ENCODE measurements at regions of chr17 and their contacts with region 1.

Region 1: GRCh38 chr17:75784473-75785015 is at the start of gene UNK:
- DNase-seq: peak; percentile 100
- H3K4me3 ChIP-seq: peak within 1 kb of the TSS; percentile 76
- H3K27ac ChIP-seq: peak within 1 kb of the TSS; percentile 91
- H3K4me1 ChIP-seq: peaks cover 54% of the 10 kb centered on the region
- CTCF ChIP-seq: no peak
- total RNA-seq, gene UNK: 41.5 and 44.0 TPM in 2 replicates

Region 2: DNA sequence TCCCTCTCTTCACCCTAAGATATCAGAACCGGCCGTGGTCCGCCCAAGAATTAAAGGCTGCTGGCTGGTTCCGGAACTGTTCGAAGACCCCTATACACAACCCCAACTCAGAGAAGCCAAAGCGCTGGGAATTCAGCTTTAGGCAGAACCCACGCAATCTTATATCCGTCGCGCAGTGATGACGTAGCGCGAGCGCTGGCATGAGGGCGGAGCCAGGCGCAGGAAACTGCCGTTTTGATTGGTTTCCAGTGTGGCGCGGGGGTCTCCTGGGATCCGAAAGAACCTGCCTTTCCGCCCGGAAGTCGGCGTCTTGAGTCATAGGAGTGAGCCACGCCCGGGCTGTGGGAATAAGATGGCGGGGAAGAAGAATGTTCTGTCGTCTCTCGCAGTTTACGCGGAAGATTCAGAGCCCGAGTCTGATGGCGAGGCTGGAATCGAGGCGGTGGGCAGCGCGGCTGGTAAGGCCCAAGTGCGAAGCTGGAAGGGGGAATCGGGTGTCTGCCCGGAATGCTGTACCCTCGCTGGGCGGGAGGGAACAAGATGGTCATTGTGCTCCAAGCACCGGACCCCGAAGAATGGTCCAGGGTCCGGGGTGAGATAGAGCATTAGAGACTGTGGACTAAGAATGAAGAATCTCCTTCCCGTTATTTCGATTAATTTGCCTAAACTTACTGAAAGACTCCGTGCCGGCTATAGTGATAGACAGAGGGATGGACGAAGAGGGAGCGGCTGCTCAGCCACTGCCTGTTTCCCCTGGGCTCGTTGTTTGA is 117.3 kb before region 1 on chr17 and contains the starts of genes RECQL5 and SAP30BP:
- CTCF ChIA-PET with region 1: no interaction called
- POLR2A ChIA-PET with region 1: interaction called, 3 read pairs
- intact Hi-C with region 1: loop called (anchors 1 kb)
- DNase-seq: peak; percentile 100
- H3K4me3 ChIP-seq: peak within 1 kb of the TSS; percentile 84
- H3K27ac ChIP-seq: peak within 1 kb of the TSS; percentile 94
- H3K4me1 ChIP-seq: peaks cover 54% of the 10 kb centered on the region
- CTCF ChIP-seq: no peak
- total RNA-seq, gene RECQL5: 90.0 and 91.9 TPM in 2 replicates
- total RNA-seq, gene SAP30BP: 122 and 127 TPM in 2 replicates

Region 3: GRCh38 chr17:75720725-75721462 is 63.6 kb before region 1 on chr17 and contains the start of gene ITGB4:
- CTCF ChIA-PET with region 1: no interaction called
- POLR2A ChIA-PET with region 1: no interaction called
- intact Hi-C with region 1: no loop called
- DNase-seq: peak; percentile 75
- H3K4me3 ChIP-seq: peak within 1 kb of the TSS; percentile 52
- H3K27ac ChIP-seq: no peak within 1 kb of the TSS
- H3K4me1 ChIP-seq: peaks cover 7% of the 10 kb centered on the region
- CTCF ChIP-seq: 0 out of 2 replicates have a peak, but pooled peaks have one; percentile 36
- total RNA-seq, gene ITGB4: 0.66 and 2.0 TPM in 2 replicates

Region 4: DNA sequence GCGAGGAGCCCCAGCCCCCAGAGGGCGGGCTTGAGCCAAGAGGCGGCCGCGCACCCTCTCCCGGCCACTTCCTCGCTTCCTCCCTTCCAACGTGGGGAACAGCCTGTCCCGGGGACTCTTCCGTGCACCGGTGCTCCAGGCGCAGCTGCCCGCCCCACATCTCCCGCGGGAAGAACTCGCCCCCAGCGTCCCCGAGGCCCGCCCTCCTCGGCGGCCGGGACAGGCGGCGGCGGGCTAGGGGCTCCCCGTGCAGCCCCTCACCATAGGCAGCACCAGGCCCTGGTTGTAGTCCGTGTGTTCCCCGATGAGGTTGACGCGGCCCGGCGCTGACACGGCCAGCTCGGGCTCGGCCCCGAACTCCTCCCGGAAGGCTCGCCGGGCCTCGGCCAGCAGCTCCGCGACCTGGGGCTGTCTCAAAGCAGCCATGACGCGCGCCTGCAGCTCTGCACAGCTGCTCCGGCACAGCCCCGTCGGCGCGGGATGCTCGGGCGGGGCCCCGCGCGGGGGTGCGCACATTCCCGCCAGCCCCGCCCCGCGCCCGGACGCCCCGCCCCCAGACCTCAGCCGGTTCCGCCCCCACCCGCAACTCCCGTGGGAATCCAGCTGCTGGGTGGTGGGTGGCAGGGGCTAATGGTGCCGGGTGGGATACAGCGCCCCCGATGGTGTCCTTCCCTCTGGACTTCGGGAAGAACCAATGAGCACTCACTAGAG is 19.7 kb before region 1 on chr17 and contains the start of gene GALK1:
- CTCF ChIA-PET with region 1: interaction called, 5 read pairs
- POLR2A ChIA-PET with region 1: interaction called, 12 read pairs
- intact Hi-C with region 1: loop called (anchors 1 kb)
- DNase-seq: peak; percentile 91
- H3K4me3 ChIP-seq: peak within 1 kb of the TSS; percentile 75
- H3K27ac ChIP-seq: peak within 1 kb of the TSS; percentile 22
- H3K4me1 ChIP-seq: peaks cover 18% of the 10 kb centered on the region
- CTCF ChIP-seq: peak; percentile 48
- total RNA-seq, gene GALK1: 88.2 and 99.4 TPM in 2 replicates

Region 5: GRCh38 chr17:75795820-75796607 is 11.5 kb after region 1 on chr17:
- CTCF ChIA-PET with region 1: interaction called, 3 read pairs
- POLR2A ChIA-PET with region 1: interaction called, 33 read pairs
- intact Hi-C with region 1: no loop called
- DNase-seq: no peak
- H3K4me3 ChIP-seq: no peak overlapping the region
- H3K27ac ChIP-seq: no peak overlapping the region
- H3K4me1 ChIP-seq: no peaks in the 10 kb centered on the region
- CTCF ChIP-seq: no peak

Region 6: GRCh38 chr17:75827252-75828115 is 42.9 kb after region 1 on chr17:
- CTCF ChIA-PET with region 1: interaction called, 4 read pairs
- POLR2A ChIA-PET with region 1: interaction called, 8 read pairs
- intact Hi-C with region 1: loop called (anchors 2 kb)
- DNase-seq: peak; percentile 71
- H3K4me3 ChIP-seq: peak overlapping the region; percentile 39
- H3K27ac ChIP-seq: peak overlapping the region; percentile 9
- H3K4me1 ChIP-seq: peaks cover 20% of the 10 kb centered on the region
- CTCF ChIP-seq: peak; percentile 82

Region 7: DNA sequence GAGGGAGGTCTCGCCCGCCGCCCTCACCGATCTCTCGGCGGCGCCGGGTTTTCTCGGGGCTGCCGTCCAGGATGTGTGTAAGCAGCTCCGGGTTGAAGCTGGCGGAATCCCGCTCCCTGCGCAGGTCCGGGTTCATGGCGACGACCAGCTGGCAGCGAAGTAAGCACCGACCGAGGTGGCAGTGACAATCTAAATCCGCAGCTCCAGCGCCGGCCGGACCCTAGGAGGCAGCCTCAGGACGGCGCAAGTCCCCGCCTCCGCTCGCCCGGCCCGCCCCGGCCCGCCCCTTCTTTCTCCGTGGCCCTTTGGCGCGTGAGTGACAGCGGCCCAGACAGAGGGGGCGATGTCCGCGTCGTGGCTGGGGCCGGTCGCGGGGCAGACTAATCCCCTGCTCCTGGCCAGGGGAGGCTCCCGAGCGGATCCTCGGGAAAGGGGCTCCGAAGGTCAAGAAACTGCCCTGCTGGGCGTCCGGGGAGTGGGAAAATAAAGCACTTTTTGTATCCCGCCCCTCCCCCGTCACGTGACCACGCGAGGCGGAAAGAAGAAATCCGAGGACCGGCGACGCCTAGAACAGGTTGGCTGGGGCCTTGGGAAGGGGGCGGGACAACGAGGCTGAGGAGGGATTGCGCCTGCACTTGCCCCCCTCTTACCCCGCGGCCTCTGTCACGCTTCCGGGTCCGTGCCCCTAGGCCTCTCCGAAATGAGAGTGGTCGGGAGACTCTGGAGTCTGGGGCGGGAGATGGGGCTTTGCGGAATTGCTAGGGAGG is 194.6 kb after region 1 on chr17 and contains the starts of genes ACOX1 and TEN1:
- CTCF ChIA-PET with region 1: no interaction called
- POLR2A ChIA-PET with region 1: no interaction called
- intact Hi-C with region 1: loop called (anchors 10 kb)
- DNase-seq: peak; percentile 99
- H3K4me3 ChIP-seq: peak within 1 kb of the TSS; percentile 79
- H3K27ac ChIP-seq: peak within 1 kb of the TSS; percentile 69
- H3K4me1 ChIP-seq: peaks cover 52% of the 10 kb centered on the region
- CTCF ChIP-seq: peak; percentile 66
- total RNA-seq, gene ACOX1: 12.3 and 22.6 TPM in 2 replicates
- total RNA-seq, gene TEN1: 17.6 and 22.5 TPM in 2 replicates

Region 8: DNA sequence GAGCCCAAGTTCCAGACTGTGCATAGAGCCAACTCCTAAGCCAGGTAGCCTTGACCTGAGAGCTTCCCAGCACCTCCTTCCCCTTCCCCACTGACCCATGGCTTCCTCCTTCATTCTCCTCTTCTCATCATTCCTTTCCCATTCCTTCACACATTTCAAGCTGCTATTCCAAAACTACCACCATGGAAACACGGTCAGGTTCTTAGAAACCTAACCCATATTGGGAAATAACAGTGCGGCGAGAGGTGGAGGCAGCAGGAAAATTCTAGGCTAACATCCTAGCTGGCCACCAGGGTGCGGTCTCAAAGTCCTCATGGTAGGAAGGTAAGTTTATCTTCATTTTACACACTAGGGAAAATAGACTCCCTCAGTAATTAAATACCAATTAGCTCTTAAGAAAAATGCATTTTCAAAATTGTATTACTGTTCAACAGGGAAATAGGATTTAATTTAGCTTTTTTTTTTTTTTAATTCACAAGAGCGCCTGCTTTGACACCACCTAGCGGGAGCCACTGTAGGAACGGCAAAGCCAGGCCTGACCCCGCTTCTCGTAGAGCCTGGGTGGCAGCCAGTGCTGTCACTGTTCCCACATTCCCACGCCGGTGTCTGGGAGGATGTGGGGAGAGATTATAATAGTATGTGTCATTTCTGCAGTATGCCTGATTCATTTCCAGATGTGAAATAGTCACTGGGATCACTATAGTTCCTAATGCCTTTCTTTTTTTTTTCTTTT is 585.9 kb after region 1 on chr17:
- CTCF ChIA-PET with region 1: no interaction called
- POLR2A ChIA-PET with region 1: no interaction called
- intact Hi-C with region 1: no loop called
- DNase-seq: peak; percentile 52
- H3K4me3 ChIP-seq: no peak overlapping the region
- H3K27ac ChIP-seq: no peak overlapping the region
- H3K4me1 ChIP-seq: no peaks in the 10 kb centered on the region
- CTCF ChIP-seq: peak; percentile 99

Measured in OCI-LY7 (cell line).